Gastrocnemius medialis (tissue), 4 donors: ENCODE measurements at regions of chr4 and their contacts with region 1.

Region 1: DNA sequence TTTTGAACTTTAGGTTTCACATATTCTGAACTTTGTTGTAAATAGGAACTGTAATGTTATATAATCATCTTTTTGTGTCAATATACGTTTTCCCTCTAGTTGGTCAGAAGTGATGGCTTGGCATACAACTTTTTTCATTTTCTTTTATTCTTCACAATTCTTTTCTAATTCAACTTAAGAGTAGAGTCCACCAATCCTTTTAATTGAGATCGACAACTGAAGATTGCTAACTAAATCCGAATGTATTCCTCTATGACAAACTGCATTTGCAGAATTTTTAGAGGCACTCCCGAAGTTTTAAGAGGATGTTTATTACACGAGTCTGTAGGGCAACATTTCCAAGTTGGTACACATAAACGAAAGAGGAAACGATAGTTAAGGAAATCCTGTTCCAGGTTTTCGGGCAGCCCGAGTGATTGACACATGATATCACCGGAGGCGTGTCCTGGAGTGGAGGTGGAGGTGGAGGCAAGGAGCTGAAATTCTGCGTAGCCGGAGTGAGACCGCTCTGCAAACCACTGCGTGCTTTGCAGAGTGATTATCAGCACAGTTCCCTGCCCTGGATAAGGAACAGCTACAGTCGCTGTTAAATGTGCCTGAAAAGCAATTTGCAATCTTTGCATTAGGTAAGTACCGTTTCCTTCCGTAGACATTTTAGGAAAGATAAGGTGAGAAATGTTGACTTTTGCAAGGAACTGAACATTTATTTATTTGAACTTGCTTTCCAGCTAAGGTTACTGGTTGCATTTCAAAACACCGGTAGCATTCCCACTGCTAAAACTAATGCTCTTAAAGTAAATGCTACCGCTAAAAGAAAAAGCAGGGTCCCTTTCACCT is at the start of gene SPRY1:
- DNase-seq: peak; percentile 87 to 91
- ATAC-seq: peak; percentile 64 to 66
- H3K4me3 ChIP-seq: peak within 1 kb of the TSS; percentile 82 to 94 (median 88)
- H3K27ac ChIP-seq: peak within 1 kb of the TSS; percentile 91 to 98 (median 96)
- H3K4me1 ChIP-seq: peaks cover 6 to 11% of the 10 kb centered on the region in 2 donors
- H3K27me3 ChIP-seq: no peaks in the 10 kb centered on the region
- CTCF ChIP-seq: no peak
- POLR2A ChIP-seq: peak; percentile 65 to 88
- total RNA-seq, gene SPRY1: 32.8 to 72.2 (median 50.9) TPM

Region 2: DNA sequence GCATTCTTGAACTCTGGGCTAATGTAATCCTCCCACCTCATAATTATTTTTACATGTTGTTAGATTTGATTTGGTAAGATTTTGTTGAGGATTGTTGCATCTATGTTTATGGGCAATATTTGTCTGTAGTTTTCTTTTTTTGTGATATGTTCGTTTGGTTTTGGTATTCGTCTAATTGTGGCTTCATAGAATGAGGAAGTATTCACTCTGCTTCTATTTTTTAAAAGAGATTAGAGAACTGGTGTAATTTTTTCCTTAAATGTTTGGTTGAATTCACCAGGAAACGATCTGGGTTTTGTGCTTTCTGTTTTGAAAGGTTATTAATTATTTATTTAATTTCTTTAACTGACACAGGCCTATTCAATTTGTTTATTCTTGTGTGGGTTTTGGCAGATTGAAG is 312.9 kb before region 1 on chr4:
- in situ Hi-C with region 1: no loop called
- intact Hi-C with region 1: no loop called
- DNase-seq: no peak
- ATAC-seq: no peak
- H3K4me3 ChIP-seq: no peak overlapping the region
- H3K27ac ChIP-seq: no peak overlapping the region
- H3K4me1 ChIP-seq: no peaks in the 10 kb centered on the region
- H3K27me3 ChIP-seq: no peaks in the 10 kb centered on the region
- CTCF ChIP-seq: no peak
- POLR2A ChIP-seq: no peak

Region 3: GRCh38 chr4:123378794-123379193 is 17.7 kb before region 1 on chr4:
- in situ Hi-C with region 1: no loop called
- intact Hi-C with region 1: no loop called
- DNase-seq: no peak
- ATAC-seq: no peak
- H3K4me3 ChIP-seq: no peak overlapping the region
- H3K27ac ChIP-seq: no peak overlapping the region
- H3K4me1 ChIP-seq: no peaks in the 10 kb centered on the region
- H3K27me3 ChIP-seq: no peaks in the 10 kb centered on the region
- CTCF ChIP-seq: no peak
- POLR2A ChIP-seq: no peak

Region 4: GRCh38 chr4:123495530-123495929 is 99.0 kb after region 1 on chr4:
- in situ Hi-C with region 1: loop called in 1 of 4 experiments (anchors 10 kb)
- intact Hi-C with region 1: loop called (anchors 5 kb)
- DNase-seq: peak; percentile 52 to 70
- ATAC-seq: peak; percentile 100
- H3K4me3 ChIP-seq: no peak overlapping the region
- H3K27ac ChIP-seq: peak overlapping the region; percentile 40 to 67 (median 62)
- H3K4me1 ChIP-seq: peaks cover 4 to 5% of the 10 kb centered on the region in 2 donors
- H3K27me3 ChIP-seq: no peaks in the 10 kb centered on the region
- CTCF ChIP-seq: no peak
- POLR2A ChIP-seq: no peak

Region 5: GRCh38 chr4:123649645-123650391 is 253.3 kb after region 1 on chr4:
- in situ Hi-C with region 1: loop called in 1 of 4 experiments (anchors 25 kb)
- intact Hi-C with region 1: loop called (anchors 2 kb)
- DNase-seq: peak; percentile 29 to 49
- ATAC-seq: peak; percentile 85 to 96
- H3K4me3 ChIP-seq: peak overlapping the region; percentile 19 to 35 (median 30)
- H3K27ac ChIP-seq: peak overlapping the region; percentile 77 to 81 (median 78)
- H3K4me1 ChIP-seq: peaks cover 32 to 41% of the 10 kb centered on the region in 2 donors
- H3K27me3 ChIP-seq: no peaks in the 10 kb centered on the region
- CTCF ChIP-seq: no peak
- POLR2A ChIP-seq: peak in 1 of 2 donors; percentile 23

Region 6: GRCh38 chr4:123744664-123745290 is 348.3 kb after region 1 on chr4:
- in situ Hi-C with region 1: no loop called
- intact Hi-C with region 1: loop called (anchors 10 kb)
- DNase-seq: no peak
- ATAC-seq: peak; percentile 68 to 75
- H3K4me3 ChIP-seq: peak overlapping the region in 1 of 4 donors; percentile 34
- H3K27ac ChIP-seq: peak overlapping the region; percentile 47 to 65 (median 53)
- H3K4me1 ChIP-seq: peaks cover 32 to 33% of the 10 kb centered on the region in 2 donors
- H3K27me3 ChIP-seq: no peaks in the 10 kb centered on the region
- CTCF ChIP-seq: no peak
- POLR2A ChIP-seq: no peak

Region 7: GRCh38 chr4:124030160-124030561 is 633.6 kb after region 1 on chr4:
- in situ Hi-C with region 1: loop called in 1 of 4 experiments (anchors 10 kb)
- intact Hi-C with region 1: loop called (anchors 10 kb)
- DNase-seq: peak; percentile 35 to 58
- ATAC-seq: peak; percentile 81 to 89
- H3K4me3 ChIP-seq: no peak overlapping the region
- H3K27ac ChIP-seq: peak overlapping the region; percentile 46 to 65 (median 56)
- H3K4me1 ChIP-seq: peaks cover 14 to 18% of the 10 kb centered on the region in 2 donors
- H3K27me3 ChIP-seq: no peaks in the 10 kb centered on the region
- CTCF ChIP-seq: no peak
- POLR2A ChIP-seq: no peak

Region 8: DNA sequence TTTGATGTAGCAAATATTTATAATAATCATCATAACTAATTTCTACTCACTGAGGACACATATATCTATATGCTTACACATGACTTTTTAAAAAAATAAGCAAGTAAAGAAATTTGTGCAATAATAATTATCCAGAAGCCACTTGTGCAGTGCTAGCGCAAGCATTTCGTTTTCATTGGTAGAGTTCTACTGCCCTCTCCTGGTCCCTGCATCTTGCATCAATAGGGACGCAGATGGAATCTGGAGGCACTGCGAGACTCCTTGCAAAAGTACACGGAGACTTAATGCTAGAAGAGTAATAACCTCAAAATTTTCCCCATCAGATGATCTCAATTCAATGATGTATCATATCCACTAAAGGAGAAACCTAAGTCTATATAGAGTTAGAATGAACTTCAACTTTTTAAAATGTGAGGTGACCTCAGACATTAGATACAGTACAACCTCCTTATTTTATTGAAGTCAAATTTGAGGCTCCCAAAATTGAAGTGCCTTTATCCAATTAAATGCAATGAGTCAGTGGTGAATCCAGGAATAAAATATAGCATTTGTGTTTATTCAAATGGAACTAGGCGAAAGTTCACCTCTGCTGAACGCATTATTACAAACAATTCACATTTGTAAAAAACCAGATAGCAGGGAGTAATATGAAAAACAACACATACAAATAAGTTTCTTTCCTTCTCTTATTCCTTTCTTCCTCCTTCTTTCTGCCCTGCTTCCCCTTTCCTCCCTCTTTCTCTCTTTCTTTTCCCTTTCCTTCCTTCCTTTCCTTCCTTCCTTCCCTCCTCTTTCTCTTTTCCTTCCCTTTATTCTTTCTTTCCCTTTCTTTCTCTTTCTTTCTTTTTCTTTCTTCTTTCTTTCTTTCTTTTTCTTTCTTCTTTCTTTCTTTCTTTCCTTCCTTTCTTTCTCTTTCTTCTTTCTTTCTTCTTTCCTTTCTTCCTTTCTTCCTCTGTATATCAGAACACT is 866.0 kb after region 1 on chr4:
- in situ Hi-C with region 1: loop called in 1 of 4 experiments (anchors 25 kb)
- intact Hi-C with region 1: no loop called
- DNase-seq: peak; percentile 28 to 41
- ATAC-seq: peak; percentile 73 to 78
- H3K4me3 ChIP-seq: no peak overlapping the region
- H3K27ac ChIP-seq: no peak overlapping the region
- H3K4me1 ChIP-seq: no peaks in the 10 kb centered on the region
- H3K27me3 ChIP-seq: no peaks in the 10 kb centered on the region
- CTCF ChIP-seq: peak; percentile 60 to 80 (median 77)
- POLR2A ChIP-seq: no peak